Naive thymus-derived CD4-positive, alpha-beta T cell (primary cell): ENCODE measurements at regions of chr13 and their contacts with region 1.

Region 1: DNA sequence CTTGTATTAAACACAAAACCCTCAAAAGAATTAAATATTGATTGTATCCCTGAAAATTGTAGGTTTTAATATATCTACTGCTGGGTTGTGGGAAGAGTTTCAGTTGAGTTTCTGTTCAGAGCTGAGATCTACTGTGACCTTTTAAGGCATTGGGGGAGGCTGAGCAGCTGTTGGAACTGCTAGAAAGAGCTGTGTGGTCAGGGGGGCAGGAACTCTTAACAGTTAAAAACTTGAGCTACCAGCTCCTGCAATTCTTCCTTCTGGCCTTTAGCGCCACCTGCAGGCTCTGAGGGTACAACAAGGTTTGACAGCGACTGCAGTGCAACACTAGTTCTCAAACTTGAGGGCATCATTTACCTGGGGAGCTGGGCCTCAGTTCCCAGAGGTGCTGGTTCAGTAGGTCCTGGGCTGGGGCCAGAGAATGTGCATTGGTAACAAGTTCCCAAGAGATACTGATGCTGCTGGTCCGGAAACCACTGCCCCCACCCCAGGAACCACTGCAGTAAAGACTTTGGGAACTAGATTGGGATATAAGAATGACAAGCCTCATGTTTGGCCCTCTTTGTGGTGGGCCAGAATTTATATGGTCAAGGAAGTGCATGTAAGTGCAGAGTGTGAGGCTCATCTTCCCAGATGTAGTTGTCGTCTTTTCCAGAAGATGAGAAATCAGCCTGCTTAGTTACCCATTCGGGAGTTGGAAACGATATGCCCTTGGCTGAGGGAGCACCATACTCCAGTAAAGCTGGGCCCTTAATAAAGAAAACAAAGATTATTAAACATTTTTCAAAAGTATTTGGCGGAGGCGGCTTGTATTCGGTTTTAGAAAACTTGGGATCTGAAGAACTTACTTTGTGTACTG is 2.6 kb downstream of the RNASEH2B start:
- DNase-seq: peak; percentile 72 to 86 (median 82)
- ATAC-seq: peak; percentile 73
- H3K4me3 ChIP-seq: peak overlapping the region; percentile 86
- H3K4me3 Mint-ChIP-seq: peak overlapping the region; percentile 72 to 99 (median 93)
- H3K27ac ChIP-seq: peak overlapping the region; percentile 86
- H3K27ac Mint-ChIP-seq: peak overlapping the region; percentile 72 to 98 (median 92)
- H3K4me1 ChIP-seq: peaks cover 15 to 28% of the 10 kb centered on the region in 2 donors
- H3K4me1 Mint-ChIP-seq: peaks cover 34 to 70% (median 62%) of the 10 kb centered on the region in 7 donors
- H3K27me3 ChIP-seq: no peaks in the 10 kb centered on the region
- H3K27me3 Mint-ChIP-seq: no peaks in the 10 kb centered on the region

Region 2: DNA sequence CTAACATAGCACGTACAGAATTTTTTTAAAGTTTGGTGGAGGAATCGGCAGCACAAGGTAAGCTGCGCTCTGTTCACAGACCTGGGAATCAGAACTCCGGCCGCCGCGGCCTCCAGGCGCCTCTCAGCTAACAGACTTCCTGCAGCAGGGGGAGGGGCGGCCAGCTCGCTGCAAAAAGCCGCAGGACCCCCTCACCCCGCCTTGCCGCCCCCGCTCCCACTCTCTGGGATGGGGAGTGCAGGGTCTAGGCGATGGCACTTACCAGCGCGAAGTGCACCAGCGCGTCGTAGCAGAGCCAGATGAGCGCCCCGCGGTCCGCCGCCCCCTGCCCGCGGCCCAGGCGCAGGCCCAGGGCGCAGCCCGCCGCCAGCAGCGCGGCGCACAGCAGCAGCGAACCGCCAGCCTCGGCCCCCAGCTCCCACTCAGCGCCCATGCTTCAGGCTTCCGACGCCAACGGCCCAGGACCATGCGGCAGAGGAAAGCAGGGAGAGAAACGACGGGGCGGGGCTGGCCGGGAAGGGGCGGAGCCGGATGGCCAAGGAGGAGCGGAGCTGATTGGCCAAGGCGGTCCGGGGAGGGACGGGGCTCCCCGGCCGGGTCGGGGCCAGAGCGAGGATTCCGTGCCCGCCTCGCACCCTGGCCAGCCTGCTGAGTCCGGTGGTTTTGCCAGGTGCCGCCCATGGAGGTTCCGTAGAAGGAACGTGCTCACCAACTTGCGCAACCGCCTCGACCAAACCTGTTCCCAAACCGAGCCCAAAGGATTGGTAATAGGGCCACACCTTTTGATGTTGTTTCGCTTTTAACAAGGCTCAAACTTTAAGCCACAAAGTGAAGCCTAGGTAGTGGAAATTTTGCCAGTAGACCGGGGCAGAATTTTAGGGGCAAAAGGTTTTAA is 1220.9 kb before region 1 on chr13 and contains the start of gene EBPL:
- CTCF ChIA-PET with region 1: no interaction called
- POLR2A ChIA-PET with region 1: no interaction called
- intact Hi-C with region 1: loop called in 1 of 2 experiments (anchors 2 kb)
- DNase-seq: peak; percentile 57 to 91 (median 73)
- ATAC-seq: peak; percentile 97
- H3K4me3 ChIP-seq: peak within 1 kb of the TSS; percentile 67
- H3K4me3 Mint-ChIP-seq: peak within 1 kb of the TSS; percentile 88 to 96 (median 92)
- H3K27ac ChIP-seq: peak within 1 kb of the TSS; percentile 56
- H3K27ac Mint-ChIP-seq: peak within 1 kb of the TSS; percentile 73 to 91 (median 81)
- H3K4me1 ChIP-seq: peaks cover 0 to 17% of the 10 kb centered on the region in 2 donors
- H3K4me1 Mint-ChIP-seq: peaks cover 21 to 58% (median 45%) of the 10 kb centered on the region in 7 donors
- H3K27me3 ChIP-seq: no peaks in the 10 kb centered on the region
- H3K27me3 Mint-ChIP-seq: no peaks in the 10 kb centered on the region
- total RNA-seq, gene EBPL: 13.3 to 34.9 (median 20.4) TPM

Region 3: GRCh38 chr13:49996951-49997895 is 914.9 kb before region 1 on chr13 and contains the start of gene TRIM13:
- CTCF ChIA-PET with region 1: interaction called, 18 read pairs
- POLR2A ChIA-PET with region 1: interaction called, 33 read pairs
- intact Hi-C with region 1: loop called (anchors 1 kb)
- DNase-seq: peak; percentile 64 to 85 (median 82)
- ATAC-seq: peak; percentile 88
- H3K4me3 ChIP-seq: peak within 1 kb of the TSS; percentile 97
- H3K4me3 Mint-ChIP-seq: peak within 1 kb of the TSS; percentile 83 to 95 (median 86)
- H3K27ac ChIP-seq: peak within 1 kb of the TSS; percentile 89
- H3K27ac Mint-ChIP-seq: peak within 1 kb of the TSS; percentile 84 to 92 (median 87)
- H3K4me1 ChIP-seq: peaks cover 25 to 31% of the 10 kb centered on the region in 2 donors
- H3K4me1 Mint-ChIP-seq: peaks cover 16 to 57% (median 49%) of the 10 kb centered on the region in 7 donors
- H3K27me3 ChIP-seq: no peaks in the 10 kb centered on the region
- H3K27me3 Mint-ChIP-seq: no peaks in the 10 kb centered on the region
- total RNA-seq, gene TRIM13: 18.3 to 27.1 (median 21.8) TPM

Region 4: GRCh38 chr13:50365408-50366391 is 546.5 kb before region 1 on chr13:
- CTCF ChIA-PET with region 1: no interaction called
- POLR2A ChIA-PET with region 1: no interaction called
- intact Hi-C with region 1: loop called in 1 of 2 experiments (anchors 2 kb)
- DNase-seq: peak in 4 of 9 donors; percentile 9 to 33 (median 16)
- ATAC-seq: peak; percentile 71
- H3K4me3 ChIP-seq: peak overlapping the region; percentile 7
- H3K4me3 Mint-ChIP-seq: peak overlapping the region in 9 of 10 donors; percentile 7 to 78 (median 68)
- H3K27ac ChIP-seq: peak overlapping the region; percentile 53
- H3K27ac Mint-ChIP-seq: peak overlapping the region; percentile 51 to 88 (median 82)
- H3K4me1 ChIP-seq: peaks cover 6 to 28% of the 10 kb centered on the region in 2 donors
- H3K4me1 Mint-ChIP-seq: peaks cover 14 to 39% (median 25%) of the 10 kb centered on the region in 7 donors
- H3K27me3 ChIP-seq: no peaks in the 10 kb centered on the region
- H3K27me3 Mint-ChIP-seq: peaks cover 0 to 53% (median 5%) of the 10 kb centered on the region in 5 donors

Region 5: GRCh38 chr13:50611117-50611781 is 300.9 kb before region 1 on chr13:
- CTCF ChIA-PET with region 1: no interaction called
- POLR2A ChIA-PET with region 1: no interaction called
- intact Hi-C with region 1: loop called in 1 of 2 experiments (anchors 2 kb)
- DNase-seq: peak in 5 of 9 donors; percentile 12 to 44 (median 30)
- ATAC-seq: peak; percentile 37
- H3K4me3 ChIP-seq: no peak overlapping the region
- H3K4me3 Mint-ChIP-seq: peak overlapping the region in 1 of 10 donors; percentile 13
- H3K27ac ChIP-seq: no peak overlapping the region
- H3K27ac Mint-ChIP-seq: peak overlapping the region in 1 of 9 donors; percentile 59
- H3K4me1 ChIP-seq: no peaks in the 10 kb centered on the region
- H3K4me1 Mint-ChIP-seq: peaks cover 0 to 22% (median 10%) of the 10 kb centered on the region in 7 donors
- H3K27me3 ChIP-seq: no peaks in the 10 kb centered on the region
- H3K27me3 Mint-ChIP-seq: peaks cover 5 to 37% (median 16%) of the 10 kb centered on the region in 5 donors

Region 6: GRCh38 chr13:50845211-50845610 is 67.0 kb before region 1 on chr13:
- CTCF ChIA-PET with region 1: interaction called, 3 read pairs
- POLR2A ChIA-PET with region 1: no interaction called
- intact Hi-C with region 1: loop called in 1 of 2 experiments (anchors 5 kb)
- DNase-seq: no peak
- ATAC-seq: no peak
- H3K4me3 ChIP-seq: no peak overlapping the region
- H3K4me3 Mint-ChIP-seq: no peak overlapping the region
- H3K27ac ChIP-seq: no peak overlapping the region
- H3K27ac Mint-ChIP-seq: no peak overlapping the region
- H3K4me1 ChIP-seq: peaks cover 0 to 5% of the 10 kb centered on the region in 2 donors
- H3K4me1 Mint-ChIP-seq: peaks cover 5 to 21% (median 15%) of the 10 kb centered on the region in 7 donors
- H3K27me3 ChIP-seq: no peaks in the 10 kb centered on the region
- H3K27me3 Mint-ChIP-seq: peaks cover 17 to 28% (median 19%) of the 10 kb centered on the region in 5 donors

Region 7: GRCh38 chr13:51583875-51584730 is 671.9 kb after region 1 on chr13 and contains the start of gene WDFY2:
- CTCF ChIA-PET with region 1: no interaction called
- POLR2A ChIA-PET with region 1: no interaction called
- intact Hi-C with region 1: loop called (anchors 5 to 10 kb)
- DNase-seq: peak; percentile 99 to 100 (median 100)
- ATAC-seq: peak; percentile 92
- H3K4me3 ChIP-seq: peak within 1 kb of the TSS; percentile 95
- H3K4me3 Mint-ChIP-seq: peak within 1 kb of the TSS; percentile 85 to 100 (median 98)
- H3K27ac ChIP-seq: peak within 1 kb of the TSS; percentile 88
- H3K27ac Mint-ChIP-seq: peak within 1 kb of the TSS; percentile 95 to 100 (median 98)
- H3K4me1 ChIP-seq: peaks cover 12 to 17% of the 10 kb centered on the region in 2 donors
- H3K4me1 Mint-ChIP-seq: peaks cover 26 to 47% (median 35%) of the 10 kb centered on the region in 7 donors
- H3K27me3 ChIP-seq: no peaks in the 10 kb centered on the region
- H3K27me3 Mint-ChIP-seq: peaks cover 0 to 3% (median 0%) of the 10 kb centered on the region in 5 donors
- total RNA-seq, gene WDFY2: 13.3 to 44.3 (median 21.1) TPM